ENCODE measurements at regions of chr16 and their contacts with region 1.

Region 1: GRCh38 chr16:49592546-49593423 is 219.2 kb downstream of the C16orf78 start:
- DNase-seq: no peak
- ATAC-seq: peak; percentile 93
- H3K4me3 ChIP-seq: no peak overlapping the region
- H3K27ac ChIP-seq: no peak overlapping the region
- H3K4me1 ChIP-seq: peaks cover 43% of the 10 kb centered on the region
- H3K27me3 ChIP-seq: no peaks in the 10 kb centered on the region; a peak in 1 of 4 replicates
- CTCF ChIP-seq: peak; percentile 73 to 86 (median 83)
- EP300 ChIP-seq: no peak
- POLR2A ChIP-seq: no peak
- RAD21 ChIP-seq: peak; percentile 59

Region 2: DNA sequence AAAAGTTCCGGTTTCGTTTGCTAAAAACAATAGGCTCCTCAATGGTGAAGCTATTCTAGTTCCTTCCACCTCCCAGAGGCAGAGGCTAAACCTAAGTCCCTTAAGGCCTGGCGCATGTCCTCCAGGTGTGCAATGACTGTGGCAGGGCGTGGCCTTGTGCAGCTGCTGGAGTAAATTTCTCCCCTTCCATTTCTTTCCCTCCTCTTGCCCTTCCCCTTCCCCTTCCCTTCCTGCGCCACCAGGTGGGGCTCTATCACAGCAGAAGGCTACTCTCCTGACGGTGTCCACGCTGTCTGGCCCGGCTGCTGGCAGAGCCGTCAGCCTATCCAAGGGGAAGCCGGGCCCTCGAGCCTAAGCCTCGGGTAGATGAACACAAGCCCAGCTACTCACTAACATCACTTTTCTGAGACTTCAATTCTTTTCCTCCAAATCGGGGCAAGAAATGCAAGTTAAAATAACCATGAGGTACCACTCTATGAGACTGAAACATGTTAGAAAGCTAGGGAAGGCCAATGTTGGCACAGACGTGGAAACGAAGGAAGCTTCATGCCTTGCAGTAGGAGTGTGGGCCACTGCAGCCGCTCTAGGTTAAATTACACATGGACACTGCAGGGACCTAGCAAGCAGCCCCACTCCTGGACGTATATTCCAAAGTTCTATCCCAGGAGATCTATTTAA is 184.8 kb before region 1 on chr16:
- CTCF ChIA-PET with region 1: interaction called, 22 read pairs
- POLR2A ChIA-PET with region 1: no interaction called
- RAD21 ChIA-PET with region 1: interaction called, 3 read pairs
- SMC1A ChIA-PET with region 1: interaction called, 3 read pairs
- in situ Hi-C with region 1: loop called (anchors 10 kb)
- intact Hi-C with region 1: loop called (anchors 1 kb)
- DNase-seq: peak; percentile 64
- ATAC-seq: peak; percentile 99
- H3K4me3 ChIP-seq: no peak overlapping the region
- H3K27ac ChIP-seq: no peak overlapping the region
- H3K4me1 ChIP-seq: peaks cover 4% of the 10 kb centered on the region; the same call in 1 of the 2 replicates
- H3K27me3 ChIP-seq: no peaks in the 10 kb centered on the region
- CTCF ChIP-seq: peak; percentile 84 to 89 (median 88)
- EP300 ChIP-seq: no peak
- POLR2A ChIP-seq: no peak
- RAD21 ChIP-seq: peak; percentile 95

Region 3: GRCh38 chr16:49419006-49419405 is 173.8 kb before region 1 on chr16:
- CTCF ChIA-PET with region 1: interaction called, 3 read pairs
- POLR2A ChIA-PET with region 1: no interaction called
- RAD21 ChIA-PET with region 1: no interaction called
- SMC1A ChIA-PET with region 1: no interaction called
- in situ Hi-C with region 1: loop called (anchors 10 kb)
- intact Hi-C with region 1: no loop called
- DNase-seq: no peak
- ATAC-seq: no peak
- H3K4me3 ChIP-seq: no peak overlapping the region
- H3K27ac ChIP-seq: no peak overlapping the region
- H3K4me1 ChIP-seq: no peaks in the 10 kb centered on the region
- H3K27me3 ChIP-seq: peaks cover 1 to 4% of the 10 kb centered on the region in 2 experiments; a peak in 3 of 4 replicates
- CTCF ChIP-seq: no peak
- EP300 ChIP-seq: no peak
- POLR2A ChIP-seq: no peak
- RAD21 ChIP-seq: no peak

Region 4: DNA sequence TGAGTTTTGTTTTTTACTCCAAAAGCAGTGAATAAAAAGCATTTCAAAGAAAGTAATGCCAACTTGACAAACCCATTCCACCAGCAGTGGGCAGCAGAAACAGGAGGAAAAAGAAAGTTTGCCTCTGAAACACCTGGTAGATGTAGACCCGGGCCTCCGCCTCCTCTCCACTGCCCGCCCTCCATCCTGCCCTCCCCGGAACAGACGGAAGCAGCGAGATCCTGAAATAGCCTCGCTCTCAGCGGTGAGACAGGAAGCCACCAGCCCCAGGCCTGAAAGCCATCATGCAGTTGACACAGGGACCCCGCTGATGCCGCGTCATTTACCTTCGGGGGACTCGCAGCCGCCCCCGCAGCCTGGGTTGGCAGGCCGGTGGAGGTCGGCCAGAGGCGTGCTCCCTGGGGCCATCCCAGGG is 151.4 kb before region 1 on chr16:
- CTCF ChIA-PET with region 1: interaction called, 4 read pairs
- POLR2A ChIA-PET with region 1: no interaction called
- RAD21 ChIA-PET with region 1: no interaction called
- SMC1A ChIA-PET with region 1: no interaction called
- in situ Hi-C with region 1: no loop called
- intact Hi-C with region 1: loop called (anchors 1 kb)
- DNase-seq: peak; percentile 71
- ATAC-seq: peak; percentile 93
- H3K4me3 ChIP-seq: peak overlapping the region; percentile 56; the same call in 1 of the 2 replicates
- H3K27ac ChIP-seq: peak overlapping the region; percentile 70
- H3K4me1 ChIP-seq: peaks cover 20% of the 10 kb centered on the region
- H3K27me3 ChIP-seq: no peaks in the 10 kb centered on the region; a peak in 1 of 4 replicates
- CTCF ChIP-seq: peak; percentile 31 to 57 (median 38); a peak in 5 of 6 replicates
- EP300 ChIP-seq: no peak
- POLR2A ChIP-seq: peak; percentile 78
- RAD21 ChIP-seq: peak; percentile 50

Region 5: GRCh38 chr16:49491771-49492761 is 100.7 kb before region 1 on chr16:
- CTCF ChIA-PET with region 1: interaction called, 17 read pairs
- POLR2A ChIA-PET with region 1: no interaction called
- RAD21 ChIA-PET with region 1: interaction called, 5 read pairs
- SMC1A ChIA-PET with region 1: no interaction called
- in situ Hi-C with region 1: no loop called
- intact Hi-C with region 1: loop called (anchors 1 kb)
- DNase-seq: no peak
- ATAC-seq: peak; percentile 89
- H3K4me3 ChIP-seq: no peak overlapping the region
- H3K27ac ChIP-seq: no peak overlapping the region
- H3K4me1 ChIP-seq: no peaks in the 10 kb centered on the region
- H3K27me3 ChIP-seq: no peaks in the 10 kb centered on the region
- CTCF ChIP-seq: peak; percentile 62 to 84 (median 78)
- EP300 ChIP-seq: no peak
- POLR2A ChIP-seq: no peak
- RAD21 ChIP-seq: peak; percentile 52

Region 6: DNA sequence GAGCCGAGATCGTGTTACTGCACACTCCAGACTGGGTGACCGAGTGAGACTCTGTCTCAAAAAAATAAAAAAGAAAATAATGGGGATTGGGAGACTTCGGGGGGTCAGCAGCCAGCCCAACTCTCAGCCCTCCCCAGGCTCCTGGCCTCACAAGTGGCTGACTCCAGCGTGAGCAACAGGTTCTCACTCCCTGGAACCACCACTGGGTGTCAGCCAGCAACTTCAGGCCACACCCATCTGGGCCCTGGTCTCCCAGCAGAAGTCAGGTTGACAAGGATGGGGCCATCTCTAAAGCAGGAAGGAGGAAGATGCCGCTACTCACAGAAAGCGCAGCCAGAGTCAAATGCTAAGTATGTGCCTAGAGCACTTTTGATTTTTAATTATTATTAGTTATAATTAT is 79.7 kb before region 1 on chr16:
- CTCF ChIA-PET with region 1: interaction called, 4 read pairs
- POLR2A ChIA-PET with region 1: no interaction called
- RAD21 ChIA-PET with region 1: no interaction called
- SMC1A ChIA-PET with region 1: no interaction called
- in situ Hi-C with region 1: no loop called
- intact Hi-C with region 1: loop called (anchors 1 kb)
- DNase-seq: no peak
- ATAC-seq: peak; percentile 78
- H3K4me3 ChIP-seq: no peak overlapping the region
- H3K27ac ChIP-seq: no peak overlapping the region
- H3K4me1 ChIP-seq: no peaks in the 10 kb centered on the region
- H3K27me3 ChIP-seq: no peaks in the 10 kb centered on the region; a peak in 1 of 4 replicates
- CTCF ChIP-seq: peak; percentile 17 to 34 (median 27); a peak in 3 of 6 replicates
- EP300 ChIP-seq: no peak
- POLR2A ChIP-seq: no peak
- RAD21 ChIP-seq: peak; percentile 44

Region 7: DNA sequence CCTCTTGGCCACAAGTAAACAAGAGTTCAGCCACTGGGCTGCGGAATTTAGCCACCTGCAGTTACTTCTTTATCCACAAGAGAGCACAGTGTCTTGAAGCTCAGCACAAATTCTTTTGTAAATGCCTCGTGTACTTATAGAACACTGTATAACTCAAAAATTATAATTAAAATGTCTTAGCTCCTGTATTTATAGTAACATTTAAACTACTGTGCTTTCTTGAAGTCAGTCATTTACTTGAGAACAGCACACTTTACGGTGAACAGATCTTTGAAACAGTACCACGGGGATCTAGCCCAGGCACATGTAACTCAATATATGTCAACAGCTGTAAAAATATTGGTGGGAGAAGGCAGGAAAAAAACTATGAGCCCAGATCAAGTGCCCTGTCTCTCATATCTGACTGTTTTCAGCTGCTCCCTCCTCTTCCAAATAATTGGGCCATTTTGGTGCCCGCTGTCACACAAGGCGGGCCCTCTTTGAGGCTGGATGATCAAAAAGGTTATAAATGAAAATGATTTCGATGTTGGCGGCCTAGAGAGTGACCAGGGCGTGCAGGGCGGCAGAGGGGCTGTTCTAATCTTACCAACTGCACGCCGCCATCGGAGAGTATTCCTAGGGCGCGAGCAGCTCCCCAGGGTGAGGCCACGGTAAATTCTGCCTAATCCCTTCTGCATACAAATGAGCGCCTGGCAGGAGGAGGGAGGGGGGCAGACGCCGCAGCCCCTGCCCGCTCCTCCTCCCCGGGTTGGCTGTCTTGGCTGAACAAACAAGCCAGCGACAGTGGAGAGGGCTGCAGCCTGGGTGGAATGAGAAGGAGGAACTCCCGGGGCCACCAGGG is 36.0 kb before region 1 on chr16:
- CTCF ChIA-PET with region 1: interaction called, 3 read pairs
- POLR2A ChIA-PET with region 1: no interaction called
- RAD21 ChIA-PET with region 1: no interaction called
- SMC1A ChIA-PET with region 1: no interaction called
- in situ Hi-C with region 1: no loop called
- intact Hi-C with region 1: loop called (anchors 5 kb)
- DNase-seq: no peak
- ATAC-seq: peak; percentile 57; the same call in 2 of the 3 replicates
- H3K4me3 ChIP-seq: no peak overlapping the region
- H3K27ac ChIP-seq: no peak overlapping the region
- H3K4me1 ChIP-seq: 0 out of 2 replicates have a peak, but pooled peaks cover 5% of the 10 kb centered on the region
- H3K27me3 ChIP-seq: no peaks in the 10 kb centered on the region
- CTCF ChIP-seq: peak; percentile 9 to 55 (median 32); a peak in 2 of 6 replicates
- EP300 ChIP-seq: no peak
- POLR2A ChIP-seq: no peak
- RAD21 ChIP-seq: peak; percentile 45

Region 8: GRCh38 chr16:49631187-49632041 is 38.6 kb after region 1 on chr16:
- CTCF ChIA-PET with region 1: no interaction called
- POLR2A ChIA-PET with region 1: no interaction called
- RAD21 ChIA-PET with region 1: no interaction called
- SMC1A ChIA-PET with region 1: no interaction called
- in situ Hi-C with region 1: no loop called
- intact Hi-C with region 1: no loop called
- DNase-seq: no peak
- ATAC-seq: no peak
- H3K4me3 ChIP-seq: no peak overlapping the region
- H3K27ac ChIP-seq: no peak overlapping the region
- H3K4me1 ChIP-seq: peaks cover 19% of the 10 kb centered on the region
- H3K27me3 ChIP-seq: no peaks in the 10 kb centered on the region
- CTCF ChIP-seq: no peak
- EP300 ChIP-seq: no peak
- POLR2A ChIP-seq: no peak
- RAD21 ChIP-seq: no peak

Region 9: DNA sequence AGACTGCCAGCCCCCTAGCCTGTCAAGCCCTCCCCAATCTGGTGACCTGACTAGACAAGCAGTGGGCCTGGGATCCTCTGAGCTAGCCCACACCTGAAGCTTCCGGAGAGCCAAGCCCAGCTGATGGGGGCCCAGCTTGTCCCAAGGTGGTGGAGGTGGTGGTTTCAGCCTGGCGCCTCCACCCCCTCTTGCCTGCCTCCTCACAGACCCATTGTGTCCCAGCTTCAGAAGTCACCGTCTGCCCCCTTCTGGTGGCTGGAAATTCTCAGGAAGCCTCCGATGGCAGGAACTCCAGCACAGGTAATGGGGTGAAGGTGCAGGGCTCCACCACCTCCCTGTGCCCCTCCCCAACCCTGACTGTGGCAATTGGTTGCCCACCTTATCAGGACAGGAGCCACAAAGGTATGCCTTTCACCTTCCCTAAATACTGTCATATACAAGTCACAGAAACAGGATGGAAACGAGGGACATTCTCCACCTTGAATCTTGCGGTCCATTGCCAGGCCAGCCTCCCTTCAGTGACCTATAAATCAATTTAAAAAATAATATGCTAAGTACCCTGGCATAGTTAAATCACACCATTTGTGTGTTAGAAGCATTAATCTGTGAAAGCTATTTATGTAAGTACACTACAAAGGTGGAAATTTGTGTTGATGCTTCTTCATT is 329.1 kb after region 1 on chr16:
- CTCF ChIA-PET with region 1: no interaction called
- POLR2A ChIA-PET with region 1: no interaction called
- RAD21 ChIA-PET with region 1: no interaction called
- SMC1A ChIA-PET with region 1: no interaction called
- in situ Hi-C with region 1: no loop called
- intact Hi-C with region 1: no loop called
- DNase-seq: no peak
- ATAC-seq: peak; percentile 85
- H3K4me3 ChIP-seq: no peak overlapping the region
- H3K27ac ChIP-seq: no peak overlapping the region
- H3K4me1 ChIP-seq: no peaks in the 10 kb centered on the region; the same call in 1 of the 2 replicates
- H3K27me3 ChIP-seq: no peaks in the 10 kb centered on the region
- CTCF ChIP-seq: peak; percentile 54 to 64 (median 61)
- EP300 ChIP-seq: no peak
- POLR2A ChIP-seq: no peak
- RAD21 ChIP-seq: peak; percentile 76

Measured in GM12878 (cell line).